OCI-LY7 (cell line): ENCODE measurements at regions of chr2 and their contacts with region 1.

Region 1: GRCh38 chr2:20675701-20676352 is 8.9 kb downstream of the GDF7 start:
- DNase-seq: peak; percentile 84
- H3K4me3 ChIP-seq: peak overlapping the region; percentile 0
- H3K27ac ChIP-seq: peak overlapping the region; percentile 86
- H3K4me1 ChIP-seq: peaks cover 38% of the 10 kb centered on the region
- CTCF ChIP-seq: no peak

Region 2: GRCh38 chr2:20661067-20661980 is 14.5 kb before region 1 on chr2:
- CTCF ChIA-PET with region 1: interaction called, 25 read pairs
- POLR2A ChIA-PET with region 1: interaction called, 30 read pairs
- intact Hi-C with region 1: loop called (anchors 1 kb)
- DNase-seq: peak; percentile 75
- H3K4me3 ChIP-seq: no peak overlapping the region
- H3K27ac ChIP-seq: no peak overlapping the region
- H3K4me1 ChIP-seq: peaks cover 14% of the 10 kb centered on the region
- CTCF ChIP-seq: peak; percentile 94

Region 3: GRCh38 chr2:20698916-20699613 is 23.2 kb after region 1 on chr2:
- CTCF ChIA-PET with region 1: no interaction called
- POLR2A ChIA-PET with region 1: interaction called, 28 read pairs
- intact Hi-C with region 1: no loop called
- DNase-seq: no peak
- H3K4me3 ChIP-seq: no peak overlapping the region
- H3K27ac ChIP-seq: peak overlapping the region; percentile 41
- H3K4me1 ChIP-seq: peaks cover 43% of the 10 kb centered on the region
- CTCF ChIP-seq: no peak

Region 4: DNA sequence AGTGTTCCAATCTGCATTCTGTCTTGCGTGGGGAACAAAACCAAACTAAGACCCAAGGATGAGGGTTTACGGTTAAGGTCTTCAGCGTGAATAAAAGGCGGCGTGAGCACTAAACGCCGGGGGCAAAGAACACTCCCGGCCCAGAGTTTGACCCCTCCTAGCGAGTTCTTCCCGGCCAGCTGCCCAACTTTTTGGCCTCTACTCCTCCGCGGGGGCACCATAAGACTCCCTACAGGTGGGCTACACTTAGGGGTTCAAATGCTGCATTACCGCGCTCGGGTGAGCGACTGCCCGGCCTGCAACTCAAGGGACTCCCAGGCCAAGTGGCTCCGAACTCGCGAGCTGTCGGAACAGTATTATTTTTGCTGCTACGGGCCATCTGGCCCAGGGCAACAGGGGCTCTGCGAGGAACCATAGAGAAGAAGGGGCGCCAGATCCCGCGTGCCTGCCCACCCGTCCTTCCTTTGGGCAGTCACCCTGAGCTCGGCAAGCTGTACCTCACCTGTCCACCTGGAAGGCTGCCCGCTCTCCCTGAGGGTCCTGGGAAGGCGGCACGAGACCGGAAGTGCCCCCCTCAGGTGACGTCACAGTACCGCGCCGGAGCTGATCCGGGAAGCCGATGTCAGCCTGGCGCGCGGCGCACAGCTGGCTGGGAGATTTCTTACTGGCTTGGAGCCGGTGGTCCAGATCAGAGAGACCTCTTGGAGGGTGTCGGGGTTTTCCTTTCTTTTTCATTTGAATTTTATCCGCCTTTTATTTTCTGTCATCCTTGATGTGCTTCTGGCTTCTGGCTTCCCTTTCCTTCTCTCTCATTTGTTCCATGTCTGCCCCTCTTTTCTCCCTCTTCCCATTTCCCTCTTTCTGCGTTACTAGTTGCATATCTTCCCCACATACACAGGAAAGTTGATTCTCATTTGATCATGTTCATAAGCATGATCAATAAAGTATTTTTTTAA is 147.0 kb after region 1 on chr2 and contains the start of gene LDAH:
- CTCF ChIA-PET with region 1: interaction called, 4 read pairs
- POLR2A ChIA-PET with region 1: interaction called, 7 read pairs
- intact Hi-C with region 1: loop called (anchors 2 kb)
- DNase-seq: peak; percentile 89
- H3K4me3 ChIP-seq: peak within 1 kb of the TSS; percentile 97
- H3K27ac ChIP-seq: peak within 1 kb of the TSS; percentile 68
- H3K4me1 ChIP-seq: no peaks in the 10 kb centered on the region
- CTCF ChIP-seq: no peak
- total RNA-seq, gene LDAH: 14.5 and 21.7 TPM in 2 replicates